Panc1 (cell line): ENCODE measurements at regions of chr14 and their contacts with region 1.

Region 1: DNA sequence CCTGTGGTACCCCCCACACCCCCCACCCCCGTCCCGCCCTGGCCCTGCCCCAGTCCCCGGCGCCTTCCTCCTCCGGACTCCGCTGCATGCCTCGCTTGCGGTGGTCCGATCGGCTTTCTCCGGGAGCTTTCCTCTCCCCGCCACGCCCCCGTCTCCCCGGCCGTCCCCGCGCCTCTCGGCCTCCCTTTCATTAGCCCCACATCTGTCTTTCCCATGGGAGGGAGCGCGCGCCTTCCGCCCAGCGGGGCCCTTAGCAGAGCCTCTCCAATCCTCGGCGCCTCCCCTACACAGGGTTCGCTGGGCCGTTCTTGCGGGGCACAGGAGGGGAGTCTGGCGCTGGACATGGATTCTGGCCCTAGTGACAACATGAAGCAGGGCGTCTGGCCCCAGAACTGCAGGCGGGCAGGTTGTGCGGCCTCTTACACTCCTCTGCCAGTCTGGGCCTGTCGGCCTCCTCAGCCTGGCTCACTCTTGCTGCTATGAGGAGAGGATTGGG is 1.5 kb upstream of the EFS start:
- DNase-seq: no peak
- ATAC-seq: no peak
- H3K4me3 ChIP-seq: no peak overlapping the region
- H3K27ac ChIP-seq: no peak overlapping the region
- H3K4me1 ChIP-seq: no peaks in the 10 kb centered on the region
- H3K27me3 ChIP-seq: no peaks in the 10 kb centered on the region; the same call in 1 of the 2 replicates
- CTCF ChIP-seq: no peak

Region 2: DNA sequence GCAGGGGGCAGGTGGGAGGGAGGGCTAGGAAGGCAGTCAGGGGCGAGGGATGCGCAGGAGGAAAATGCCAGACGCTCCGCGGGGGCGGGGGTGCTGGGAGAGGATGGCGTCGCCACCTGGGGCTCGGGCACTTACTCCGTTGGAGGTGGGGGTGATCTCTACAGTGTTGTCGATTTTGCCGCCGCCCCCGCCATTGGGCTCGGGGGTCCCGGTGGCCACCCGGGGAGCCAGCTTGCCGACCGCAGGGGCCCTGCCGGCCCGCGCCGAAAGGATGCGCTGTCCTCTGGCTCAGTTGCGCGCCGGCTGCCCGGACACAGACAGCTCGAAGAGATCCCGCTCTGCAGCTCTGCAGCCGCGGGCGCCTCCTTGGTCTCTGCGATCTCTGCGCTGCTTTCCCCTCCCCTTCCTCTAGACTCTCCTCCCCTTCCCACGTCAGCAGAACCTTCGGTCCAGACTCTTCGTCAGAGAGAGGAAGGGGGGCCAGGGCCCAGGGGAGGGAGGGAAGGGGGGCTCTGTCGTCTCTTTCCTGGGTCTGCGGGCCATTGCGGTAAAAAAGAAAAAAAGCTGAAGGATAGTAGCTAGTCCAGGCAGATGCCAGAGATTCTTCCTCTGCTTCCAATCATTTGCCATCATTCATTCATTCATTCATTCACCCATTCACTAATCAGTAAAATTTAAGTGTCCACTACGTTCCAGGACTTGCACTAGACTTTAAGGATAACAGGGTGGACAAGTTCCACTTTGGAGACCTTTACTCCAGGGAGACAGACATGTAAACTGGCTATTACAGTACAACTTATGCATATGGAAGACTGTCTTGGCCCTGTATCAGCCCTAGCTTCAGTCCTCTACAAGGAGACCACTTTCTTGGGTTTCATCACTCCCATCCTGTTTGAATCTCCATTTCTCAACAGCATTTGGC is 13.7 kb before region 1 on chr14 and contains the start of gene SLC22A17:
- CTCF ChIA-PET with region 1: interaction called, 14 read pairs
- POLR2A ChIA-PET with region 1: no interaction called
- in situ Hi-C with region 1: no loop called
- intact Hi-C with region 1: no loop called
- DNase-seq: no peak
- ATAC-seq: peak; percentile 89
- H3K4me3 ChIP-seq: peak within 1 kb of the TSS; percentile 37 to 47
- H3K27ac ChIP-seq: no peak within 1 kb of the TSS
- H3K4me1 ChIP-seq: no peaks in the 10 kb centered on the region
- H3K27me3 ChIP-seq: peaks cover 11% of the 10 kb centered on the region
- CTCF ChIP-seq: 0 out of 2 replicates have a peak, but pooled peaks have one; percentile 7
- total RNA-seq, gene SLC22A17: 3.2 TPM

Region 3: GRCh38 chr14:23895480-23895879 is 529.0 kb after region 1 on chr14:
- CTCF ChIA-PET with region 1: no interaction called
- POLR2A ChIA-PET with region 1: no interaction called
- in situ Hi-C with region 1: no loop called
- intact Hi-C with region 1: no loop called
- DNase-seq: no peak
- ATAC-seq: no peak
- H3K4me3 ChIP-seq: no peak overlapping the region
- H3K27ac ChIP-seq: no peak overlapping the region
- H3K4me1 ChIP-seq: no peaks in the 10 kb centered on the region
- H3K27me3 ChIP-seq: no peaks in the 10 kb centered on the region
- CTCF ChIP-seq: peak; percentile 29; the same call in 1 of the 2 replicates